ENCODE measurements at regions of chr5 and their contacts with region 1.

Region 1: GRCh38 chr5:168377525-168377924 is 86.1 kb downstream of the WWC1 start:
- DNase-seq: peak; percentile 51 to 78 (median 72)
- H3K4me3 ChIP-seq: no peak overlapping the region
- H3K4me3 Mint-ChIP-seq: peak overlapping the region in 7 of 8 donors; percentile 22 to 72 (median 55)
- H3K27ac ChIP-seq: no peak overlapping the region
- H3K27ac Mint-ChIP-seq: peak overlapping the region; percentile 72 to 93 (median 77)
- H3K4me1 ChIP-seq: peaks cover 22% of the 10 kb centered on the region
- H3K4me1 Mint-ChIP-seq: peaks cover 14 to 35% (median 28%) of the 10 kb centered on the region in 4 donors
- H3K27me3 ChIP-seq: no peaks in the 10 kb centered on the region
- H3K27me3 Mint-ChIP-seq: no peaks in the 10 kb centered on the region

Region 2: GRCh38 chr5:168409580-168410458 is 32.3 kb after region 1 on chr5:
- CTCF ChIA-PET with region 1: interaction called, 3 read pairs
- POLR2A ChIA-PET with region 1: interaction called, 8 read pairs
- intact Hi-C with region 1: loop called (anchors 5 kb)
- DNase-seq: peak in 4 of 5 donors; percentile 15 to 29 (median 22)
- H3K4me3 ChIP-seq: peak overlapping the region; percentile 31 to 53
- H3K4me3 Mint-ChIP-seq: peak overlapping the region; percentile 81 to 94 (median 85)
- H3K27ac ChIP-seq: peak overlapping the region; percentile 3
- H3K27ac Mint-ChIP-seq: peak overlapping the region; percentile 68 to 95 (median 93)
- H3K4me1 ChIP-seq: peaks cover 18% of the 10 kb centered on the region
- H3K4me1 Mint-ChIP-seq: peaks cover 15 to 36% (median 22%) of the 10 kb centered on the region in 4 donors
- H3K27me3 ChIP-seq: no peaks in the 10 kb centered on the region
- H3K27me3 Mint-ChIP-seq: no peaks in the 10 kb centered on the region

Region 3: DNA sequence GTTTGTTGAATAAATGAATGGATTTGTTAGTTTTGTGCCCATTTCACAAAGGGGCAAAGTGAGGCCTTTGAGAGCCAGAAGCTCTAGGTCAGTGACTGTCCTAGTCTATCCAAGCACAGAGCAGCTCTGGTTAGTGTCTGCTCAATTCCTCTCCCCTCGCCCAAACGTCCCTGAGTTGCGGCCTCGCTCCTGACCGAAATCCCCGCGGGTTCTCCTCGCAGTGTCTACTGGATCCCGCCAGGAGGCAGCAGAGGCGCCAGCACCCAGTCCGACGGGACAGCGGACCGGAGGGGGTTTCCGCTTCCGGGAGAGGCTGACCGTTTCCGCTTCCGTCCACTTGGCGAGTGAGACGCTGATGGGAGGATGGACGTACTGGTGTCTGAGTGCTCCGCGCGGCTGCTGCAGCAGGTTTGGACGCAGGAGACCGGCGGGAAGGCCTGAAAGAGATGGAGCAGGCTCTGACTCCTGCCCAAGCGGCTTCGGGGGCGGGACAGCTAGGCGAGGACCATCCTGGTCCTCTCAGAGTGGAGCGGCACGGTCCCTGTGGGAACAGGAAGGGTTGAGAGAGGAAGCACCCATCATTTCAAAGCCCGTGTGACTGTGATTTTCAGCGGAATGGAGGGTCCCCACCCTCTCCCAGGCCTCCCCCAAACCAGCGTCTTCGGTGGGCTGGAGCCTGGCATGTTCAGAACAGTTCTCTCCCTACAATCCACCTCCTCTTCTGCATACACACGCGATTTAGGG is 108.8 kb after region 1 on chr5 and contains the start of gene RARS1:
- CTCF ChIA-PET with region 1: no interaction called
- POLR2A ChIA-PET with region 1: interaction called, 3 read pairs
- intact Hi-C with region 1: loop called (anchors 5 kb)
- DNase-seq: peak; percentile 78 to 90 (median 81)
- H3K4me3 ChIP-seq: peak within 1 kb of the TSS; percentile 89 to 96
- H3K4me3 Mint-ChIP-seq: peak within 1 kb of the TSS; percentile 98 to 100 (median 99)
- H3K27ac ChIP-seq: peak within 1 kb of the TSS; percentile 71
- H3K27ac Mint-ChIP-seq: peak within 1 kb of the TSS; percentile 91 to 99 (median 97)
- H3K4me1 ChIP-seq: peaks cover 13% of the 10 kb centered on the region
- H3K4me1 Mint-ChIP-seq: peaks cover 23 to 50% (median 36%) of the 10 kb centered on the region in 4 donors
- H3K27me3 ChIP-seq: no peaks in the 10 kb centered on the region
- H3K27me3 Mint-ChIP-seq: peaks cover 0 to 5% of the 10 kb centered on the region in 2 donors
- total RNA-seq, gene RARS1: 82.5 to 82.8 TPM